Dorsolateral prefrontal cortex (tissue), 120 donors: ENCODE measurements at regions of chr11 and their contacts with region 1.

Region 1: GRCh38 chr11:76207642-76208401 is 1.5 kb upstream of the WNT11 start:
- DNase-seq: peak in 9 of 10 donors; percentile 39 to 88 (median 65)
- H3K4me3 ChIP-seq: peak overlapping the region; percentile 47 to 83 (median 66)
- H3K27ac ChIP-seq: peak overlapping the region in 1 of 59 donors; percentile 9
- H3K27me3 ChIP-seq: peaks cover 0 to 33% (median 9%) of the 10 kb centered on the region in 45 donors
- CTCF ChIP-seq: peak; percentile 80 to 99 (median 96)

Region 2: GRCh38 chr11:75802913-75803820 is 404.7 kb before region 1 on chr11:
- intact Hi-C with region 1: loop called in 1 of 2 experiments (anchors 10 kb)
- DNase-seq: peak; percentile 61 to 92 (median 80)
- H3K4me3 ChIP-seq: peak overlapping the region in 1 of 59 donors; percentile 1
- H3K27ac ChIP-seq: peak overlapping the region in 50 of 59 donors; percentile 3 to 81 (median 47)
- H3K27me3 ChIP-seq: no peaks in the 10 kb centered on the region
- CTCF ChIP-seq: peak; percentile 72 to 98 (median 95)

Region 3: DNA sequence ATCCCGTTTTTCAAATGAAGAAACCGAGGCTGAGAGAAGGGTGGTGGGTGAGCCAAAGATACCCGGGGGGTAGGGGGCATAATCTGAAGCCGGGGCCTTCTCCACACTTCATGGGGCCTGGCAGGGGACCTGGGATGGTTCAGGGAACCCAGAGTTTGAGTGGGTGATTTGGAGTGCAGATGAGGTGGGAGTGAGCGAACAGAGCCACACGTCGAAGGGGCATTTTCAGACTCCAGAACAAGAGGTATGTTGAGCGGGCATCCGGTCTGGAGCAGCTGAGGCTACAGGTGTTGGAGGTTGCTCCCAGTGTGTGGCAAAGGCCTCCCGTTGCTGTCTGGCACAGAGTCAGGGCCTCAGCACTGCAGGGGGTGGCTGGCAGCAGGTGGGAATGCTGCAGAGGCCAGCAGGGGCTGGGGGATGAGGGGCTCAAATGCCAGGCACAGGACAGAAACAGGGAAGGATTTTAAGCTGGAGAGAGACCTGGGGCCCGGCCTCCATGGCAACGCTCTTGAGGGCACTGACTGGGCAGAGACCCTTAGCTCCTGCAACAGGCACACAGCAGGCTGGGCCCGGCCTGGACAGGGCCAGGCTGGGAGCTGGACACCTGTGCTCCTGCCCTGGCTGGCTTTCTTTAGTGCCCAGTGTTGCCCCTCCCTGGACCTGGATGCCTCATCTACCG is 47.7 kb before region 1 on chr11:
- intact Hi-C with region 1: loop called in 1 of 2 experiments (anchors 5 kb)
- DNase-seq: peak in 1 of 10 donors; percentile 16
- H3K4me3 ChIP-seq: no peak overlapping the region
- H3K27ac ChIP-seq: no peak overlapping the region
- H3K27me3 ChIP-seq: peaks cover 0 to 2% (median 0%) of the 10 kb centered on the region in 45 donors
- CTCF ChIP-seq: no peak

Region 4: GRCh38 chr11:76318744-76319384 is 111.0 kb after region 1 on chr11:
- intact Hi-C with region 1: loop called (anchors 1 to 2 kb)
- DNase-seq: peak; percentile 73 to 83 (median 78)
- H3K4me3 ChIP-seq: no peak overlapping the region
- H3K27ac ChIP-seq: no peak overlapping the region
- H3K27me3 ChIP-seq: peaks cover 0 to 32% (median 21%) of the 10 kb centered on the region in 45 donors
- CTCF ChIP-seq: peak; percentile 70 to 98 (median 91)

Region 5: DNA sequence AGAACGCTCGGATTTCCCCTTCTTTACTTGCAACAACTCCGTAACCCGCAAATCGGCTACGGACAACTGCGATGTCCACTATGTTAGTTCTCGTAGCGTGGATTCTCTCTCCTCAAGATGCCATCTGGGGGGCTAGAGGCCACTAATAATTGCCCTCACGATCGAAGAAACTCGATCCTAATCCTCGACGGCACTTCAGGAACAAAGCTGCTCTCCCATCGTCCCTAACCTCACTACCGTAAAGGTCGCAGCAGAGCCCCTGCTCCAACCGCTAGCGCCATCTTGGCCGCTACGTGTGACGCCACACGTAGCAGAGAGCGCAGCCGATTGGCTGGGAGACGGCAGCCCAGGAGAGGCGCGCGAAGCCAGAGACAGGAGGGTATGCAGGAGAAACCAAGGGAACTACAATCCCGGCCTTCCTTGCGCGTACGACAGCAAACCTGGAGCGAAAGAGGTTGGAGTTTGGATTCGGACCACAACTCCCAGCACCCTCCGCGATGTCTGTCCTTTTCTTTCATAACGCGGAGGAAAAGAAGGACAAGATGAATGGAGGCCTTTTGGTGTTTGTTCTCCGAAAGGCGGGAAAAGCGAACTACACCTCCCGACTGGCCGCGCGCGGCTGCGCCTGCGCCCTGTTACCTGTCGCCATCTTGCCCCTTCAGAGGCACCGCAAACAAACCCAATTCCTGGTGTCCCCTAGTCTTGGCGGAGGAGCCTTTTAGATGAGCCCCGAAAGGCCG is 236.7 kb after region 1 on chr11 and contains the start of gene EMSY:
- intact Hi-C with region 1: loop called in 1 of 2 experiments (anchors 5 kb)
- DNase-seq: peak; percentile 96 to 99 (median 99)
- H3K4me3 ChIP-seq: peak within 1 kb of the TSS; percentile 62 to 100 (median 98)
- H3K27ac ChIP-seq: peak within 1 kb of the TSS; percentile 28 to 98 (median 94)
- H3K27me3 ChIP-seq: no peaks in the 10 kb centered on the region
- CTCF ChIP-seq: peak in 46 of 56 donors; percentile 8 to 69 (median 39)
- total RNA-seq, gene EMSY: 26.3 to 56.1 (median 37.3) TPM